Activated CD4-positive, alpha-beta T cell treated with anti-CD3 and anti-CD28 coated beads, Interleukin-2, amount 10 ng/mL, durations not matched to agents 7 days and 5 days (primary cell): ENCODE measurements at regions of chr11 and their contacts with region 1.

Region 1: GRCh38 chr11:72683782-72684200 is 9.6 kb upstream of the PDE2A start:
- DNase-seq: peak; percentile 70
- H3K4me3 Mint-ChIP-seq: no peak overlapping the region
- H3K27ac Mint-ChIP-seq: no peak overlapping the region
- H3K4me1 Mint-ChIP-seq: peaks cover 43% of the 10 kb centered on the region
- H3K27me3 Mint-ChIP-seq: peaks cover 7% of the 10 kb centered on the region

Region 2: DNA sequence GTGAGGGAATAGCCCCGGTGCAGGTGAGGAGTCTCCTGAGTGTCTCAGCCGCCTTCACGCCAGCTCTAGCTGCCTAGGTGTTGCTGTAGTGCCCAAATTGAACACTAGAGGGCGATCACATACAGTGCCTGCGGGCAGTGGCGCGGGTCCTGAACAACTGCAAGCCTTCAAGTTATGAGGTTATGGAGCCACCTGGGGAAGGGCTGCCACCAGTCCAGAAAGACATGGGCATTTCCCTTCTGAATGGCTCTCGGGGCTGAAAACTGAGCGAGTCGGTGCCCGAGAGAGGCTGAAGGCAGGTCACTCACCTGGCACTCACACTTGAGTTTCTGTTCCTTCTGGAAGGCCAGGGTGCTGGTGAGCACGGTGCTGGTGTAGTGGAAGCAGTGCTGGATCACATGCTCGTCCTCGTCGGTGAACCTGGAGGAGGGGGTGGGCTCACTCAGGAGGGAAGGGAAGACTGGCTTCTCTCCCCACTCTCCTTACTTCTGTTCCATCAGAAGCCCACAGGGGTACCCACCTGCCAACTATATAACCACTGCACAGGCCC is 98.0 kb before region 1 on chr11:
- CTCF ChIA-PET with region 1: interaction called, 18 read pairs
- POLR2A ChIA-PET with region 1: no interaction called
- DNase-seq: peak; percentile 82
- H3K4me3 Mint-ChIP-seq: peak overlapping the region; percentile 43
- H3K27ac Mint-ChIP-seq: no peak overlapping the region
- H3K4me1 Mint-ChIP-seq: peaks cover 28% of the 10 kb centered on the region
- H3K27me3 Mint-ChIP-seq: peaks cover 47% of the 10 kb centered on the region

Region 3: GRCh38 chr11:72668611-72669347 is 15.0 kb before region 1 on chr11:
- CTCF ChIA-PET with region 1: interaction called, 12 read pairs
- POLR2A ChIA-PET with region 1: no interaction called
- DNase-seq: peak; percentile 61
- H3K4me3 Mint-ChIP-seq: no peak overlapping the region
- H3K27ac Mint-ChIP-seq: peak overlapping the region; percentile 44
- H3K4me1 Mint-ChIP-seq: peaks cover 10% of the 10 kb centered on the region
- H3K27me3 Mint-ChIP-seq: peaks cover 33% of the 10 kb centered on the region

Region 4: GRCh38 chr11:72696866-72697700 is 13.3 kb after region 1 on chr11:
- CTCF ChIA-PET with region 1: interaction called, 32 read pairs
- POLR2A ChIA-PET with region 1: no interaction called
- DNase-seq: no peak
- H3K4me3 Mint-ChIP-seq: no peak overlapping the region
- H3K27ac Mint-ChIP-seq: no peak overlapping the region
- H3K4me1 Mint-ChIP-seq: no peaks in the 10 kb centered on the region
- H3K27me3 Mint-ChIP-seq: no peaks in the 10 kb centered on the region